ENCODE measurements at regions of chrX and their contacts with region 1.

Region 1: GRCh38 chrX:11533211-11533651 is 132.5 kb downstream of the ARHGAP6 start:
- DNase-seq: no peak
- H3K4me3 ChIP-seq: no peak overlapping the region
- H3K27ac ChIP-seq: peak overlapping the region in 1 of 4 donors; percentile 17
- H3K4me1 ChIP-seq: no peaks in the 10 kb centered on the region
- H3K27me3 ChIP-seq: no peaks in the 10 kb centered on the region
- CTCF ChIP-seq: peak; percentile 77 to 98 (median 94)
- POLR2A ChIP-seq: no peak

Region 2: GRCh38 chrX:11143931-11144678 is 389.1 kb before region 1 on chrX:
- intact Hi-C with region 1: loop called (anchors 10 kb)
- DNase-seq: no peak
- H3K4me3 ChIP-seq: no peak overlapping the region
- H3K27ac ChIP-seq: no peak overlapping the region
- H3K4me1 ChIP-seq: peaks cover 0 to 5% (median 0%) of the 10 kb centered on the region in 3 donors
- H3K27me3 ChIP-seq: no peaks in the 10 kb centered on the region
- CTCF ChIP-seq: peak; percentile 50 to 70 (median 62)
- POLR2A ChIP-seq: no peak

Region 3: GRCh38 chrX:11566789-11567188 is 33.6 kb after region 1 on chrX:
- intact Hi-C with region 1: no loop called
- DNase-seq: no peak
- H3K4me3 ChIP-seq: no peak overlapping the region
- H3K27ac ChIP-seq: no peak overlapping the region
- H3K4me1 ChIP-seq: no peaks in the 10 kb centered on the region
- H3K27me3 ChIP-seq: no peaks in the 10 kb centered on the region
- CTCF ChIP-seq: no peak
- POLR2A ChIP-seq: no peak

Region 4: DNA sequence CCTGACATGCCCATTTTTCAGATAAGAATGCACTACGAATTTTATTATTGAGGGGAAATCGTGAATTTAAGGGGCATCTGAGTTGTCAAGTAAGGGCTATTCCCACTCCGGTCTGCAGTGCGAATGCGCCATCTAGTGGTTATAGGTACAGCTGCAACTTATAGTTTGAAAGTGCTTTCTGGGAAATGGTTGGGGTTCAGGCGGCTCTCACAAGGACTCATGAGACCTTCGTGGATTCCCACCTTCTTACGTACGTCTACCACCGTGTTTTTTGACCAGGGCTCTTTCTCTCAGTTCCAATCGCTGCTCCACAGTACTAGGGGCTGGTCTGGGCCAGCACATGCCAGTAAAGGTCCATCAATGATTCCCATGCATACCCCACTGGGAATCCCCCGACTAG is 237.1 kb after region 1 on chrX:
- intact Hi-C with region 1: loop called (anchors 10 kb)
- DNase-seq: no peak
- H3K4me3 ChIP-seq: no peak overlapping the region
- H3K27ac ChIP-seq: no peak overlapping the region
- H3K4me1 ChIP-seq: no peaks in the 10 kb centered on the region
- H3K27me3 ChIP-seq: no peaks in the 10 kb centered on the region
- CTCF ChIP-seq: peak; percentile 67 to 85 (median 74)
- POLR2A ChIP-seq: no peak